Naive thymus-derived CD4-positive, alpha-beta T cell (primary cell): ENCODE measurements at regions of chr3 and their contacts with region 1.

Region 1: GRCh38 chr3:195542698-195543499 is at the start of gene PPP1R2:
- DNase-seq: peak; percentile 86 to 97 (median 93)
- ATAC-seq: peak; percentile 94
- H3K4me3 ChIP-seq: peak within 1 kb of the TSS; percentile 63
- H3K4me3 Mint-ChIP-seq: peak within 1 kb of the TSS; percentile 89 to 98 (median 93)
- H3K27ac ChIP-seq: peak within 1 kb of the TSS; percentile 98
- H3K27ac Mint-ChIP-seq: peak within 1 kb of the TSS; percentile 92 to 99 (median 97)
- H3K4me1 ChIP-seq: peaks cover 37 to 66% of the 10 kb centered on the region in 2 donors
- H3K4me1 Mint-ChIP-seq: peaks cover 48 to 77% (median 73%) of the 10 kb centered on the region in 7 donors
- H3K27me3 ChIP-seq: no peaks in the 10 kb centered on the region
- H3K27me3 Mint-ChIP-seq: no peaks in the 10 kb centered on the region
- total RNA-seq, gene PPP1R2: 76.1 to 160 (median 150) TPM

Region 2: DNA sequence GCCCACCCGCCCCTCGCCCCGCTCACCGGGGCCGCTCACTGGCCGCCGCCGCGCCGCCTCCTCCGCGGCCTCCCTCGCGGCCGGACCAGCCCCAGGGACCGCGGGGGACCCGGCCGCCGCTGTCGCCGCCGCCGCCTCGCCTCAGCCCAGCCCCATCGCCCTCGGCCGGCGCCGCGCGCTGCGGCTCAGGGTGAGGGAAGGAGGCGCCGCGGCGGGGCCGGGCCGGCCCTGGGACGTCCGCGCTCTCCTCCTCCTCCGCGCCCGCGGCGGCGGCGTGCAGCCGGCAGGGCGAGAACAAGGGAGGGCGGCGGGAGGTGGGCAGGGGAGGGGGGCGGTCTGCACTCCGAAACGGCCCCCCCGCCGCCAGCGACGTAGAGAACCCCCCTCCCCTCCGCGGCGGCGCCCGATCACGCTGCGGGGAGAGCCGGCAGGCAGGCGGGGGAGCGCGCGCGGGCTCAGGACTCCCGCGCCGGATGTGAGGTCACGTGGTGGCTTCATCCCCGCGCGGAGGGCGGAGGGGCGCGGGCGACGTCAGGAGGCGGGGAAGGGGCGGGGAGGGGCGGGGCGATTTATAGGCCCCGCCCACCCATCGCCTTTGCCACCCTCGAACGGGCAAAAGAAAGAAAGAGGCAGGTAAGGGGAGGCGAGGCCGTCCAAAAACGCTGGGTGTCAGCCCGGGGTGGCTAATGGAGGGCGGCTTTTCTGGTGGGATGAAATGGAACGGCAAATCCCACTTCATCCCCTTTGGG is 1056.2 kb before region 1 on chr3 and contains the start of gene ATP13A3:
- CTCF ChIA-PET with region 1: no interaction called
- POLR2A ChIA-PET with region 1: no interaction called
- intact Hi-C with region 1: loop called (anchors 2 to 10 kb)
- DNase-seq: peak; percentile 84 to 93 (median 91)
- ATAC-seq: peak; percentile 93
- H3K4me3 ChIP-seq: peak within 1 kb of the TSS; percentile 83
- H3K4me3 Mint-ChIP-seq: peak within 1 kb of the TSS; percentile 83 to 98 (median 93)
- H3K27ac ChIP-seq: peak within 1 kb of the TSS; percentile 82
- H3K27ac Mint-ChIP-seq: peak within 1 kb of the TSS; percentile 82 to 96 (median 94)
- H3K4me1 ChIP-seq: peaks cover 20 to 25% of the 10 kb centered on the region in 2 donors
- H3K4me1 Mint-ChIP-seq: peaks cover 41 to 60% (median 45%) of the 10 kb centered on the region in 7 donors
- H3K27me3 ChIP-seq: no peaks in the 10 kb centered on the region
- H3K27me3 Mint-ChIP-seq: no peaks in the 10 kb centered on the region
- total RNA-seq, gene ATP13A3: 46.5 to 81.8 (median 58.4) TPM

Region 3: DNA sequence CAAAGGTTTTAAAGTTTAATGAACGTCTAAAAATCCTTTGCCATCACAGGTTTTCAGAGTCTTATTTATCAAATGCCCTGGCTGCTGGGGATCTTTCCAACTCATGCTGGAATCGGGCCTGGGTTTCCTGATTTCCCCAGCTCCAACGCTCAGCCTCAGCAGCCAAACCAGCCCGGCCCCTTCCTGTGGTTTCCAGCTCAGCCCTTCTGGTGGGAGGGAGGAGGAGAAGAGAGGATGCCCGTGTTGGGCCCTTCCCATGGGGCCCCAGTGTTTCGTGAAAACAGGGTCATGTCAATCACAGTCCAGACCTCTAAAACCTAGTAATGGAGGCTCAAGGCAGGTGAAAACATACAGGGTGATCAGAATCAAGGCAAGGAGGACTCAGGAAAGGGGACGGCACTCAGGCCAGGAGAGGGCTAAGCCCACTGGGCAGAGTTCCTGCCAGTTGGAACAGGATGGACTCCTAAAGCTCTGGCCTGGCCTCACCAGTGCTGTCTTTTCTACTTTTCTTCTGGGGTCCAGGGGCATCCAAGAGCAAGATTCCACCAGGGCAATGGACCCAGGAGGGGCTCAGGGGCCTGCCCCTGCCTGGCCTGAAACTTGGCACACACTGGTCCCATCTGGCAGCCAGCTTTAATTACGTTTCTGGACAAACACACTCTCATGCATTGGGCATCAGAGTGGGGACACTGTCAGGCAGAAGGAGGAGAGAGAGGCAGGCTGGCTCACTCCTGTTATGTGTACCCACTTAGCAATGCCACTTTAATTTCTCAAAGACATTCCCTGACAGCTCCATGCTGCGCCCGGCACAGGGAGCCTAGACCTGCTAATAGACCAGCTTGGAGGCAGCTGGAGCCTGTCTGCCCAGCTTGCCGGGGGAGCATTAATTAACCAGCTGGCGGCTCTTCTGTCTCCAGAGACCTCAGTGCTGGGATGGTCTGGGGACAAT is 662.6 kb before region 1 on chr3:
- CTCF ChIA-PET with region 1: no interaction called
- POLR2A ChIA-PET with region 1: no interaction called
- intact Hi-C with region 1: no loop called
- DNase-seq: peak in 1 of 9 donors; percentile 12
- ATAC-seq: no peak
- H3K4me3 ChIP-seq: no peak overlapping the region
- H3K4me3 Mint-ChIP-seq: peak overlapping the region in 1 of 10 donors; percentile 34
- H3K27ac ChIP-seq: no peak overlapping the region
- H3K27ac Mint-ChIP-seq: no peak overlapping the region
- H3K4me1 ChIP-seq: no peaks in the 10 kb centered on the region
- H3K4me1 Mint-ChIP-seq: peaks cover 6 to 18% (median 12%) of the 10 kb centered on the region in 7 donors
- H3K27me3 ChIP-seq: no peaks in the 10 kb centered on the region
- H3K27me3 Mint-ChIP-seq: peaks cover 0 to 10% (median 2%) of the 10 kb centered on the region in 5 donors

Region 4: DNA sequence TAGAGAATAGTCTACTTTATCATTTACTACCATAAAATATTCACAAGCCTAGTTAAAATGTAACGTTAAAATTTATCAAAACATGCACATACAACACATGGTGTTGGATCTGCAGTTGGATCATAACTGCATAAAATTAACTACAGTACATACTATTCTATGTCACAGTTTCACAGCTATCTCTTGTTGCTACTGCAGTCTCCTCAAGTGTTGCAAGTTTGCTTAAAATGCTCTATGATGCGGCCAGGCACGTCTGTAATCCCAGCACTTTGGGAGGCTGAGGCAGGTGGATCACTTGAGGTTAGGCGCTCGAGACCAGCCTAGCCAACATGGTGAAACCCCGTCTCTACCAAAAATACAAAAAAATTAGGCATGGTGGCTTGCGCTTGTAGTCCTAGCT is 10.1 kb before region 1 on chr3:
- CTCF ChIA-PET with region 1: interaction called, 3 read pairs
- POLR2A ChIA-PET with region 1: interaction called, 21 read pairs
- intact Hi-C with region 1: loop called in 1 of 2 experiments (anchors 1 kb)
- DNase-seq: no peak
- ATAC-seq: no peak
- H3K4me3 ChIP-seq: no peak overlapping the region
- H3K4me3 Mint-ChIP-seq: peak overlapping the region in 9 of 10 donors; percentile 10 to 98 (median 68)
- H3K27ac ChIP-seq: peak overlapping the region; percentile 56
- H3K27ac Mint-ChIP-seq: peak overlapping the region in 8 of 9 donors; percentile 21 to 91 (median 62)
- H3K4me1 ChIP-seq: peaks cover 53 to 60% of the 10 kb centered on the region in 2 donors
- H3K4me1 Mint-ChIP-seq: peaks cover 44 to 98% (median 90%) of the 10 kb centered on the region in 7 donors
- H3K27me3 ChIP-seq: no peaks in the 10 kb centered on the region
- H3K27me3 Mint-ChIP-seq: no peaks in the 10 kb centered on the region

Region 5: DNA sequence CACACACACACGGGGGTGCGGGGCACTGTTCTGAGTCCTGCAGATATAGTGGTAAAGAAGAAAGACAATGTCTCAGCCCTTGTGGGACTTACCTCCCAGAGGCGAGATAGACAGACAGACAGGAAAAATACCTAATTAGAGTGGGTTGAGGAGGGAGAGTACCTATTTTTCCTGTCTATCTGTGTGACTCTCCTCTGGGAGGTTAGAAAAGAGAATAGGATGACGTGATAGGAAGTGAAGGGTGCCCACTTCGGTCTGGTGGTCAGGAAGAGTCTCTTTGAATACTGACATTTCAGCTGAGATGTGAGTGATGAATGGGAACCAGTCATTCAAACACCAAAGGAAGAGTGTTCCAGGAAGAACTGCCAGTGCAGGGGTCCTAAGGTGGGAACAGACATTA is 44.9 kb after region 1 on chr3:
- CTCF ChIA-PET with region 1: no interaction called
- POLR2A ChIA-PET with region 1: interaction called, 3 read pairs
- intact Hi-C with region 1: loop called in 1 of 2 experiments (anchors 2 kb)
- DNase-seq: no peak
- ATAC-seq: no peak
- H3K4me3 ChIP-seq: no peak overlapping the region
- H3K4me3 Mint-ChIP-seq: no peak overlapping the region
- H3K27ac ChIP-seq: no peak overlapping the region
- H3K27ac Mint-ChIP-seq: no peak overlapping the region
- H3K4me1 ChIP-seq: peaks cover 7% of the 10 kb centered on the region in 2 donors
- H3K4me1 Mint-ChIP-seq: peaks cover 0 to 12% (median 5%) of the 10 kb centered on the region in 7 donors
- H3K27me3 ChIP-seq: no peaks in the 10 kb centered on the region
- H3K27me3 Mint-ChIP-seq: peaks cover 0 to 13% (median 0%) of the 10 kb centered on the region in 5 donors

Region 6: DNA sequence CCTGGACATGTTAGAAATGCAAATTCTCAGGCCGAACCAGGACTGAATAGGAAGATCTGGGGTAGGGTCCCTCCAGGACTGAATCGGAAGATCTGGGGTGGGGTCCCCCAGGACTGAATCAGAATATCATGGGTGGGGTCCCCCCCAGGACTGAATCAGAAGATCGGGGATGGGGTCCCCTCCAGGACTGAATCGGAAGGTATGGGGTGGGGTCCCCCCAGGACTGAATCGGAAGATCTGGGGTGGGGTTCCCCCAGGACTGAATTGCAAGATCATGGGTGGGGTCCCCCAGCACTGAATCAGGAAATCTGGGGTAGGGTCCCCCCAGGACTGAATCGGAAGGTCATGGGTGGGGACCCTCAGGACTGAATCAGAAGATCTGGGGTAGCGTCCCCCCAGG is 413.7 kb after region 1 on chr3:
- CTCF ChIA-PET with region 1: no interaction called
- POLR2A ChIA-PET with region 1: no interaction called
- intact Hi-C with region 1: no loop called
- DNase-seq: no peak
- ATAC-seq: no peak
- H3K4me3 ChIP-seq: no peak overlapping the region
- H3K4me3 Mint-ChIP-seq: no peak overlapping the region
- H3K27ac ChIP-seq: no peak overlapping the region
- H3K27ac Mint-ChIP-seq: peak overlapping the region in 1 of 9 donors; percentile 19
- H3K4me1 ChIP-seq: no peaks in the 10 kb centered on the region
- H3K4me1 Mint-ChIP-seq: peaks cover 8 to 28% (median 18%) of the 10 kb centered on the region in 7 donors
- H3K27me3 ChIP-seq: no peaks in the 10 kb centered on the region
- H3K27me3 Mint-ChIP-seq: no peaks in the 10 kb centered on the region